ENCODE measurements at regions of chr7 and their contacts with region 1.

Region 1: DNA sequence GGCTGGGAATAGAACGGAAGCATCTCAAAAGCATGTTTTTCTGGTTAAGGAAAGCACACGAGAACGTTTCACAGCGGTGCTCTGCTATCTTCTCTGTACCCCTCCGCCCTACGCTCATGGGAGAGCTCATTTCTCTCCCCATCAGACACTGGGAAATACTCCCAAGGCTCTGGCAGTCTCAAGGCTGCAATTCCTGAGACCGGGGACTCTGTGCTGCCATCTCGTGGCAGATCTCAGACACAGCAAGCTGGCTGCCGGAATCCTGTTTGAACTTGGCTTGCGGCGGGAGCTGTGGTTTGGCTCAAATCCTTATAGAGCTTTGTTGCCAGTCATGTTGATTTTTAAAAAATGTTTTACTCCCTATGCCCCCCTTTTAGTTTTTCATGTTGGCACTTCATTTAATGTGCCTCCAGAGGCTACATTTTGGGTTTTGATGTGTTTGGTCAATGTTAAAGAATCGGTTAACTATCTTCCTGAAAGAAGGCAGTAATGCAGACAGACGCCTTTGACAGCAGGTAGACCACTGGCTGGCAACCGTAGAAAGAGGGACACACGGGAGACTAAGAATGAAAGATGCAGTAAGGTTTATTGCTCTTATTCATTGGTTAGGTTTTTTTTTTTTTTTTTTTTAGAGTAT is 27.6 kb downstream of the BMPER start:
- DNase-seq: peak; percentile 69
- ATAC-seq: peak; percentile 47
- H3K4me3 Mint-ChIP-seq: no peak overlapping the region
- H3K27ac Mint-ChIP-seq: no peak overlapping the region
- H3K4me1 Mint-ChIP-seq: peaks cover 4% of the 10 kb centered on the region
- H3K27me3 Mint-ChIP-seq: peaks cover 5% of the 10 kb centered on the region

Region 2: DNA sequence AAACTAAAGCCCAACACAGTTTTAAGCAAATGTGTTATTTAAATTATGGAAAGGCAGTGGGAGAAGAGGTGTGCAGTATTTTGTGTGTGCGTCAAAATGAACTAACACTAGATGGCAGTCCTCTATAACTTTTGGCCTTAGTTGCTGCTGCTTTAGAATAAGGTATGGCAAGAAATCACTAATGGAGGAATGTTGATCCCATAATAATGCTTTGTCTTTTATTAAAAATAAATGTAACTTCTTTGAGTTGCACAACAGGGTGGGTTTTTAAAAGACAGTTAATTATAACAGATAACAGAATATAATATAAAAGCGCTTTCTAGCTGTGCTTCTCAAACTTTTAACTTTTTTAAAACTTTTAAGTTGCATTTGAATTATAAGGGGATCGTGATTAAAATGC is 747.2 kb before region 1 on chr7:
- CTCF ChIA-PET with region 1: interaction called, 18 read pairs
- POLR2A ChIA-PET with region 1: no interaction called
- DNase-seq: no peak
- ATAC-seq: peak; percentile 53
- H3K4me3 Mint-ChIP-seq: no peak overlapping the region
- H3K27ac Mint-ChIP-seq: no peak overlapping the region
- H3K4me1 Mint-ChIP-seq: peaks cover 5% of the 10 kb centered on the region
- H3K27me3 Mint-ChIP-seq: no peaks in the 10 kb centered on the region

Region 3: GRCh38 chr7:33757562-33758165 is 175.3 kb before region 1 on chr7:
- CTCF ChIA-PET with region 1: interaction called, 11 read pairs
- POLR2A ChIA-PET with region 1: no interaction called
- DNase-seq: peak; percentile 46
- ATAC-seq: no peak
- H3K4me3 Mint-ChIP-seq: no peak overlapping the region
- H3K27ac Mint-ChIP-seq: no peak overlapping the region
- H3K4me1 Mint-ChIP-seq: no peaks in the 10 kb centered on the region
- H3K27me3 Mint-ChIP-seq: no peaks in the 10 kb centered on the region

Region 4: DNA sequence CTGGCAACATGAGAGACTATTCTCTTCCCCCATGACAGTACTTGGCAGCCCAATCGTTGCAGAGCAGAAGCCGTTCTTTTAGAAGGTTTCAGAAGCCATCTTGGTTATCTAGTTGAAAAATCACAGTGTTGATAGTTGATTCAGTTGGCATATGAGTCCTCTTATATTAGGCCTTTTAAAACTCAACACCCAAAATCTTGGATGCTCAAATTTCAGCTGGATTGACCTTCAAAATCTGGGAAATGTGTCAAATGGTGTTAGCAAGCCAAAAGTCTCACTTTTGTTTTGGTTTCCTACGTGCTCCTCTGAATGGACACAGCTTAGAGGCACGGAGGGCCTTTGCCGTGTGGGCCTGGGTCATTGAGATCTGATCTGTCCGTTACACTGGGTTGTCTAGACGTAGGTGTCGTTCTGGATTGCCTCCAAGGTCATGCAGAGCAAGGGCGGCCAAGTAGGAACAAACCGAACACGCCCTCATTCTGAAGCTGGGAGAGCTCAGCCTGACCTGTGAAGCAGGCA is 86.9 kb before region 1 on chr7:
- CTCF ChIA-PET with region 1: no interaction called
- POLR2A ChIA-PET with region 1: no interaction called
- DNase-seq: no peak
- ATAC-seq: no peak
- H3K4me3 Mint-ChIP-seq: no peak overlapping the region
- H3K27ac Mint-ChIP-seq: no peak overlapping the region
- H3K4me1 Mint-ChIP-seq: no peaks in the 10 kb centered on the region
- H3K27me3 Mint-ChIP-seq: peaks cover 3% of the 10 kb centered on the region

Region 5: DNA sequence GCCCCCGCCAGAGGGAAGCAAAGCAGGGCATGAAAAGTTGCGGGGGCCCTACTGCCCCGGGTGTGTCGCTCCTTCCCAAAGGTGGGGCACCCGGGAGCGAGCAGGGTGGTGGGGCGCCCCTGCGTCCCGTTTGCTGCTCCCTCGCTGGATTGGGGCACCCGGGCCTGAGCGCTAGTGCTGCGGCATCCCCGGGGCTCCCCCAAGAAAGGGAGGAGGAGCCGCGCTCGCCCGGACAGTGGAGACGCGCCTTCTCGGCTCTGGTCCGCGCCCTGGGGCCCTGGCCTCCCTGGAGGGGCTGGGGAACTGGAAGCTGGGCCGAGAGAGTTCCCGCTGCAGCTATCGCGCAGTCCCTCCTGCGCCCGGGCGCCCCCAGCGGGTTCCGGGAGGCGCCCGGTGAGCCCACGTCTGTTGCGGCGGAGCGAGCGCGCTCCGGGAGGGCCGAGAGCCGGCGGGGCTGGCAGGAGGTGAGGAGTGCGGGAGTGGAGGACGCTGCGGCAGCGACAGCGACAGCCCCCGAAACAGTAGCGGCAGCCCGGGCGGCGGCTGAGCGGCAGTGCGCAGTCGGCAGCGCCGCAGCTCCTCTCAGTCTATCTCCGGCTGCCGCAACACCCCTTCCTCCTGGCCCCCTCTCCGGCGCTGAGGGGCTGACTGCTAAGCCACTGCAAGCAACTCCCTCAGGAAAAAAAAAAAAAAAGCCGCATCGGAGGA is 28.1 kb before region 1 on chr7:
- CTCF ChIA-PET with region 1: interaction called, 12 read pairs
- POLR2A ChIA-PET with region 1: no interaction called
- DNase-seq: peak; percentile 22
- ATAC-seq: peak; percentile 82
- H3K4me3 Mint-ChIP-seq: peak overlapping the region; percentile 44
- H3K27ac Mint-ChIP-seq: no peak overlapping the region
- H3K4me1 Mint-ChIP-seq: peaks cover 5% of the 10 kb centered on the region
- H3K27me3 Mint-ChIP-seq: peaks cover 56% of the 10 kb centered on the region

Region 6: GRCh38 chr7:33921216-33921938 is 11.6 kb before region 1 on chr7:
- CTCF ChIA-PET with region 1: interaction called, 12 read pairs
- POLR2A ChIA-PET with region 1: no interaction called
- DNase-seq: no peak
- ATAC-seq: no peak
- H3K4me3 Mint-ChIP-seq: no peak overlapping the region
- H3K27ac Mint-ChIP-seq: no peak overlapping the region
- H3K4me1 Mint-ChIP-seq: no peaks in the 10 kb centered on the region
- H3K27me3 Mint-ChIP-seq: peaks cover 3% of the 10 kb centered on the region